GM12878 (cell line): ENCODE measurements at regions of chr5 and their contacts with region 1.

Region 1: GRCh38 chr5:170747851-170748250 is 35.7 kb upstream of the GABRP start:
- DNase-seq: no peak
- ATAC-seq: no peak; the same call in 2 of the 3 replicates
- H3K4me3 ChIP-seq: no peak overlapping the region
- H3K27ac ChIP-seq: no peak overlapping the region
- H3K4me1 ChIP-seq: no peaks in the 10 kb centered on the region
- H3K27me3 ChIP-seq: peaks cover 2 to 13% of the 10 kb centered on the region in 2 experiments; a peak in 3 of 4 replicates
- CTCF ChIP-seq: peak in 2 of 3 experiments; percentile 9 to 23; a peak in 1 of 6 replicates
- EP300 ChIP-seq: no peak
- POLR2A ChIP-seq: no peak
- RAD21 ChIP-seq: no peak

Region 2: GRCh38 chr5:170774836-170775235 is 27.0 kb after region 1 on chr5:
- CTCF ChIA-PET with region 1: interaction called, 7 read pairs
- POLR2A ChIA-PET with region 1: no interaction called
- RAD21 ChIA-PET with region 1: interaction called, 4 read pairs
- SMC1A ChIA-PET with region 1: interaction called, 3 read pairs
- in situ Hi-C with region 1: no loop called
- intact Hi-C with region 1: loop called (anchors 2 kb)
- DNase-seq: no peak
- ATAC-seq: peak; percentile 42; the same call in 1 of the 3 replicates
- H3K4me3 ChIP-seq: no peak overlapping the region
- H3K27ac ChIP-seq: no peak overlapping the region
- H3K4me1 ChIP-seq: peaks cover 8% of the 10 kb centered on the region
- H3K27me3 ChIP-seq: no peaks in the 10 kb centered on the region
- CTCF ChIP-seq: peak in 1 of 3 experiments; percentile 18; a peak in 1 of 6 replicates
- EP300 ChIP-seq: no peak
- POLR2A ChIP-seq: no peak
- RAD21 ChIP-seq: no peak

Region 3: DNA sequence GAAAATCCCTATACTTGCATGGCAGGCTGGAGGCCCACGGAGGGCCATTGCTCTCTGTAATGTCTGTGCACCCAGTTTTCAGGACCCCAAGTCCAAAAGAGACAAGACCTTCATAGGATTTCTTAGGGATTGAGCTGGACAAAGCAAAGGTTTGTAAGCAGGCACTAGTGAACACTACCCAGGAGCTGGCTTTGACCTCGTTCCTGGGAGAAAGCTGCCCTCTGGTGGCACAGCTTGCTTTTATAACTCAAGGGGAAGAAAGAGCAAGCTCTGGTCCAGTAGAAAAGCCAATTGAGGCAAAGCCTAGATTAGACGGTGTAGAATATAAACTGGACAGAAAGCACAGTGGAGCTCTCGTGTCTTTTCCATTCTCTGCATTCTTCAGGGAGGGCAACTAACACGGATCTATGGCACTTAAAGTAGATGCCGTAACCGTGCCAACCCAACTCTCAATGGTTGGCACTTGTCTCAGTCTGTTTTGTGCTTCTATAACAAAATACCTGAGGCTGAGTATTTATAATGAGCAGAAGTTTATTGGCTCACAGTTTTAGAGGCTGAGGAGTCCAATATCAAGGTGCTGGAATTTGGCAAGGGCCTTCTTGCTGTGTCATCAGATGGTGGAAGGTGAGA is 43.6 kb after region 1 on chr5:
- CTCF ChIA-PET with region 1: interaction called, 106 read pairs
- POLR2A ChIA-PET with region 1: no interaction called
- RAD21 ChIA-PET with region 1: interaction called, 44 read pairs
- SMC1A ChIA-PET with region 1: interaction called, 31 read pairs
- in situ Hi-C with region 1: no loop called
- intact Hi-C with region 1: loop called (anchors 1 kb)
- DNase-seq: no peak
- ATAC-seq: peak; percentile 94
- H3K4me3 ChIP-seq: no peak overlapping the region
- H3K27ac ChIP-seq: no peak overlapping the region
- H3K4me1 ChIP-seq: no peaks in the 10 kb centered on the region
- H3K27me3 ChIP-seq: no peaks in the 10 kb centered on the region; a peak in 1 of 4 replicates
- CTCF ChIP-seq: peak; percentile 49 to 71 (median 50)
- EP300 ChIP-seq: no peak
- POLR2A ChIP-seq: no peak
- RAD21 ChIP-seq: peak; percentile 58

Region 4: GRCh38 chr5:170896779-170897178 is 148.9 kb after region 1 on chr5:
- CTCF ChIA-PET with region 1: interaction called, 7 read pairs
- POLR2A ChIA-PET with region 1: no interaction called
- RAD21 ChIA-PET with region 1: no interaction called
- SMC1A ChIA-PET with region 1: no interaction called
- in situ Hi-C with region 1: no loop called
- intact Hi-C with region 1: loop called (anchors 2 kb)
- DNase-seq: no peak
- ATAC-seq: peak; percentile 41; the same call in 1 of the 3 replicates
- H3K4me3 ChIP-seq: no peak overlapping the region
- H3K27ac ChIP-seq: no peak overlapping the region
- H3K4me1 ChIP-seq: no peaks in the 10 kb centered on the region
- H3K27me3 ChIP-seq: no peaks in the 10 kb centered on the region
- CTCF ChIP-seq: peak; percentile 13 to 38 (median 36); a peak in 4 of 6 replicates
- EP300 ChIP-seq: no peak
- POLR2A ChIP-seq: no peak
- RAD21 ChIP-seq: 0 out of 2 replicates have a peak, but pooled peaks have one; percentile 31

Region 5: GRCh38 chr5:171207256-171207847 is 459.5 kb after region 1 on chr5:
- CTCF ChIA-PET with region 1: no interaction called
- POLR2A ChIA-PET with region 1: no interaction called
- RAD21 ChIA-PET with region 1: no interaction called
- SMC1A ChIA-PET with region 1: no interaction called
- in situ Hi-C with region 1: no loop called
- intact Hi-C with region 1: loop called (anchors 10 kb)
- DNase-seq: no peak
- ATAC-seq: peak; percentile 54
- H3K4me3 ChIP-seq: no peak overlapping the region
- H3K27ac ChIP-seq: no peak overlapping the region
- H3K4me1 ChIP-seq: no peaks in the 10 kb centered on the region
- H3K27me3 ChIP-seq: no peaks in the 10 kb centered on the region
- CTCF ChIP-seq: peak; percentile 26 to 47 (median 43); a peak in 4 of 6 replicates
- EP300 ChIP-seq: no peak
- POLR2A ChIP-seq: no peak
- RAD21 ChIP-seq: peak; percentile 52

Region 6: DNA sequence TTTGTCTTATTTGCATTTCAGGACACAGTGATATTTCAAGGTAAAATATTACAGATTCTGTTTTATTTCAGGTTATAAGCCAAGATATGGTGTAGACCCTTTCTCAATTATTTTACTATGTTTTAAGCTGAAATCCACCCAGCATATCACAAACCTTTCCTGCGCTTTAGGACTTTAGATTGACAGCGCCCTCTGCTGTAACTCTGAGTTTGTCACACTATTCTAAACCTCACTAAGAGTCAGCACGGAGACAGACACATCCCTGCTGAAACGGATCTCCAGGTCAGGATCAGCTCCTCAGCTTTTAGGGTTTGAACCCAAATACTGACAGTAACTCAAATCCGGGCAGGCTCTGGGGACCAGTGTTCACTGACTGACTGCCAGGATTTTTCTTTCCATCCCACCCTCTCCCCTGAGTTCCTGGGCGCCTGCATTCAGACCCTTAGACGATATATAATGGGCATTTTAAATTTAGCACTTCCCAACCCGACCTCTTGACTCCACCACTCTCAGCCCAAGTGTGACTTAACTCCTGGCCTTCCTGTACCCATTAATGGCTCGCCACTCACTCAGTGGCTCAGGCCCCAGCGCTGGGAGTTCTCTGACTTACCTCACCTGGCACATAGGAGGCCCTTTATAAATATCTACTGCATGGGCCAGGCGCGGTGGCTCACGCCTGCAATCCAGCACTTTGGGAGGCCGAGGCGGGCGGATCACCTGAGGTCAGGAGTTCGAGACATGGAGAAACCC is 594.7 kb after region 1 on chr5:
- CTCF ChIA-PET with region 1: interaction called, 4 read pairs
- POLR2A ChIA-PET with region 1: no interaction called
- RAD21 ChIA-PET with region 1: interaction called, 5 read pairs
- SMC1A ChIA-PET with region 1: no interaction called
- in situ Hi-C with region 1: loop called (anchors 5 kb)
- intact Hi-C with region 1: loop called (anchors 5 kb)
- DNase-seq: no peak
- ATAC-seq: peak; percentile 89
- H3K4me3 ChIP-seq: no peak overlapping the region
- H3K27ac ChIP-seq: no peak overlapping the region
- H3K4me1 ChIP-seq: no peaks in the 10 kb centered on the region
- H3K27me3 ChIP-seq: peaks cover 0 to 1% of the 10 kb centered on the region in 2 experiments; a peak in 1 of 4 replicates
- CTCF ChIP-seq: peak; percentile 63 to 69 (median 65)
- EP300 ChIP-seq: no peak
- POLR2A ChIP-seq: no peak
- RAD21 ChIP-seq: peak; percentile 70